Heart left ventricle (tissue), 16 donors: ENCODE measurements at regions of chr14 and their contacts with region 1.

Region 1: DNA sequence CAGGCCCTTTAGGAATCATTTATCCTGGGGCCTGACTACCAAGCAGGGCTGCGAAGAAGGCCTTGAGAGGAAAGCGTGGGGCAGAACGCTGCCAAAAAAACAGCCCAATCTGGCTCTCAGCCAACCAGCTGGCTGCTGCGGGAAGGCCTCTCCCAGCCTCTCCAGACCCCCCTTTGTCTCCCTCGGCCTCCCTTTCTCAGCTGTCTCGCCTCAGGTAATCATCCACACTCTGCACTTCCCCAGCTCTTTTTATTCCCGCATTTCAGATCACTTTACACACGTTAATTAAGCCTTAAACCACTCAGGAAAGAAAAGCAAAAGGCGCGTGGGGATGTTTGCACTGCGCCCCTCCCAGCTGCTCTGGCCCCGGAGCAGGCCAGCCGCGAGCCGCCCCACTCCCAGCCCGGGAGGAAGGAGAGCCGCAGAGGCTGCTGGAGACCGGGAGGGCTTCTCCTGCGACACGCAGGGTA is 208.2 kb upstream of the FOXN3 start:
- DNase-seq: peak in 4 of 5 donors; percentile 30 to 58 (median 48)
- ATAC-seq: peak in 3 of 4 donors; percentile 43 to 66 (median 54)
- H3K4me3 ChIP-seq: peak overlapping the region in 4 of 12 donors; percentile 5 to 34 (median 11)
- H3K27ac ChIP-seq: peak overlapping the region in 1 of 12 donors; percentile 55
- H3K4me1 ChIP-seq: peaks cover 0 to 27% (median 8%) of the 10 kb centered on the region in 12 donors
- H3K27me3 ChIP-seq: no peaks in the 10 kb centered on the region
- CTCF ChIP-seq: no peak
- POLR2A ChIP-seq: no peak

Region 2: GRCh38 chr14:89549381-89550125 is 75.7 kb before region 1 on chr14:
- intact Hi-C with region 1: no loop called
- DNase-seq: no peak
- ATAC-seq: no peak
- H3K4me3 ChIP-seq: no peak overlapping the region
- H3K27ac ChIP-seq: no peak overlapping the region
- H3K4me1 ChIP-seq: peaks cover 0 to 32% (median 13%) of the 10 kb centered on the region in 12 donors
- H3K27me3 ChIP-seq: no peaks in the 10 kb centered on the region
- CTCF ChIP-seq: no peak
- POLR2A ChIP-seq: no peak

Region 3: DNA sequence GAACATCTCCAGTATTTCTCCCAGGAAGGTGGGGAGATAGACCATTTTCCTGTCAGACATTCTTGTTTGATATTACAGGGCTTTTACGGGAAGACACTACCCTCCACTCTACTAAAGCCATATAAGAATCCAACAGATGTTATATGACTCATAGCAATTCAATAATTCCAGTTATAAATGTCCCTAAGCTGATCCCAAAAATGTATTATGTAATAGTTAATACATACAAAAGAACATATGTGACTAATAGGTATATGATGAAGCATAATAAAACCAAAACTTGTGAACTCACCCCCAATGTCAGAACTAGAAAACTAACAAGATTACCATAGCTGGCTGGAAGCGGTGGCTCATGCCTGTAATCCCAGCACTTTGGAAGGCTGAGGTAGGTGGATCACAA is 245.0 kb after region 1 on chr14:
- intact Hi-C with region 1: loop called in 1 of 10 experiments (anchors 10 kb)
- DNase-seq: no peak
- ATAC-seq: no peak
- H3K4me3 ChIP-seq: no peak overlapping the region
- H3K27ac ChIP-seq: no peak overlapping the region
- H3K4me1 ChIP-seq: no peaks in the 10 kb centered on the region
- H3K27me3 ChIP-seq: no peaks in the 10 kb centered on the region
- CTCF ChIP-seq: no peak
- POLR2A ChIP-seq: no peak